ENCODE measurements at regions of chr12 and their contacts with region 1.

Region 1: DNA sequence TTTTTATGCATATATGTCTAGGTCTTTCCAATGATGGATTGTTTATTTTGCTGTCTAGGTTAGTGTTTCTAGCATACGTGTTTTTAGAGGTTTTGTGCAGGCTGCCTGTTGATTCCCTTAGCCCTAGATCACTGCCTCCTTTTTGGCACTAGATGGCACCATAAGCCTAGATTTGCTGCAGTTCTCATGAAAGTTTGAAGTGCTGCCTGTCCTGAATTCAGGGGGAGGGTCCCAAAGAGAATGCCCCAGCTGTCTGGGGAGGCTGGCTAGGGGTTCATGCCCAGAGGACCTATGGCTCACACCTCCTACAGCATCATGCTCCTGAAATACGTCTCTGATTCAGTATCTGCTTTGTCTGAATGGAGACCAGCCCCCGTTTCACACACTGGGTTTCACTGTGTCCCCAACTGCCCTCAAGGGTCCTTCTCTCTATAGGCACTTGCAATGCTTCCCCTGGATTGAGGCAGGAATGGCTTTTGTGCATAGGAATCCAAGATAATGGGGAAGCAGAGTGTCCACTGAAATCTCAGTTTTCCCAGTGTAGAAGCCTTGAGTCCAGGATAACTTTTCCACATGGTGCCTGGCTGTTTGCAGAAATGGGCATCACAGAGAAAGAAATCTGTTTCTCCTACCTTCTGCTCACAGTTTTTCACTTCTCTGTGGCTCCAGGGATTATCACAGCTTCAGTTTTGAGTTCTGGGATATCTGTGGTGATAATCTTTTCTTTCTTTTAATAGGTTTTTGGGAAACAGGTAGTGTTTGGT is 14.2 kb upstream of the TXNRD1 start:
- DNase-seq: peak; percentile 39
- H3K4me3 ChIP-seq: no peak overlapping the region
- H3K27ac ChIP-seq: no peak overlapping the region
- H3K4me1 ChIP-seq: no peaks in the 10 kb centered on the region
- H3K27me3 ChIP-seq: no peaks in the 10 kb centered on the region
- CTCF ChIP-seq: peak; percentile 49 to 79 (median 67)
- POLR2A ChIP-seq: no peak

Region 2: GRCh38 chr12:104215638-104216297 is 14.3 kb after region 1 on chr12 and contains the start of gene TXNRD1:
- intact Hi-C with region 1: loop called (anchors 2 kb)
- DNase-seq: peak; percentile 63
- H3K4me3 ChIP-seq: peak within 1 kb of the TSS; percentile 31 to 45
- H3K27ac ChIP-seq: peak within 1 kb of the TSS; percentile 73
- H3K4me1 ChIP-seq: peaks cover 7% of the 10 kb centered on the region
- H3K27me3 ChIP-seq: no peaks in the 10 kb centered on the region
- CTCF ChIP-seq: peak; percentile 47 to 89 (median 68)
- POLR2A ChIP-seq: no peak
- total RNA-seq, gene TXNRD1: 87.6 to 115 TPM

Region 3: GRCh38 chr12:104358347-104359003 is 157.1 kb after region 1 on chr12:
- intact Hi-C with region 1: loop called (anchors 5 kb)
- DNase-seq: peak; percentile 55
- H3K4me3 ChIP-seq: no peak overlapping the region
- H3K27ac ChIP-seq: no peak overlapping the region
- H3K4me1 ChIP-seq: no peaks in the 10 kb centered on the region
- H3K27me3 ChIP-seq: no peaks in the 10 kb centered on the region
- CTCF ChIP-seq: peak; percentile 60 to 88 (median 77)
- POLR2A ChIP-seq: no peak

Region 4: GRCh38 chr12:104877123-104877705 is 675.8 kb after region 1 on chr12:
- intact Hi-C with region 1: loop called (anchors 5 kb)
- DNase-seq: peak; percentile 19
- H3K4me3 ChIP-seq: no peak overlapping the region
- H3K27ac ChIP-seq: no peak overlapping the region
- H3K4me1 ChIP-seq: no peaks in the 10 kb centered on the region
- H3K27me3 ChIP-seq: no peaks in the 10 kb centered on the region
- CTCF ChIP-seq: peak; percentile 22 to 75 (median 47)
- POLR2A ChIP-seq: no peak

Region 5: DNA sequence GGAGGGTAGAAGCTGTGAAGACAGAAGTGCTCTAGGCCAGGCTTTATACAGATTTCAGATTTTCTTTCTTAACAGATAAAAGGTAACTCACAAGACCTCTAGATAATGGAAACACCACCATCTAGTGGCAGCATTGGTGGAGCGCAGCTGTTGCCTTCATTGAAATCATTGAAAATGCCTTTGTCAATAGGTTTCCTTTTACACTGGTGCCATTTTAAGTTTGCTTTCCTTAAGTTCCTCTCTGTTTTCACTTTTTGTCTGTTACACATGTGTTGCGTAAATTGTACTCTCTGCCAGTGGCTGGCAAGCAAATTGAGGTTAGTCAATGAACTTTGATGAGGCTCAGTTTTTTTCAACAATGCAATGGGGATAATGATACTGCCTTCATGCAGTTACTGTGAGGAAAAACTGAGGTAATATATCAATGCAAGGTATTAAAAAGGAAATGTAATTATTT is 851.7 kb after region 1 on chr12:
- intact Hi-C with region 1: loop called (anchors 10 kb)
- DNase-seq: peak; percentile 66
- H3K4me3 ChIP-seq: no peak overlapping the region
- H3K27ac ChIP-seq: no peak overlapping the region
- H3K4me1 ChIP-seq: no peaks in the 10 kb centered on the region
- H3K27me3 ChIP-seq: no peaks in the 10 kb centered on the region
- CTCF ChIP-seq: peak; percentile 50 to 88 (median 84)
- POLR2A ChIP-seq: no peak